ENCODE measurements at regions of chr20 and their contacts with region 1.

Region 1: DNA sequence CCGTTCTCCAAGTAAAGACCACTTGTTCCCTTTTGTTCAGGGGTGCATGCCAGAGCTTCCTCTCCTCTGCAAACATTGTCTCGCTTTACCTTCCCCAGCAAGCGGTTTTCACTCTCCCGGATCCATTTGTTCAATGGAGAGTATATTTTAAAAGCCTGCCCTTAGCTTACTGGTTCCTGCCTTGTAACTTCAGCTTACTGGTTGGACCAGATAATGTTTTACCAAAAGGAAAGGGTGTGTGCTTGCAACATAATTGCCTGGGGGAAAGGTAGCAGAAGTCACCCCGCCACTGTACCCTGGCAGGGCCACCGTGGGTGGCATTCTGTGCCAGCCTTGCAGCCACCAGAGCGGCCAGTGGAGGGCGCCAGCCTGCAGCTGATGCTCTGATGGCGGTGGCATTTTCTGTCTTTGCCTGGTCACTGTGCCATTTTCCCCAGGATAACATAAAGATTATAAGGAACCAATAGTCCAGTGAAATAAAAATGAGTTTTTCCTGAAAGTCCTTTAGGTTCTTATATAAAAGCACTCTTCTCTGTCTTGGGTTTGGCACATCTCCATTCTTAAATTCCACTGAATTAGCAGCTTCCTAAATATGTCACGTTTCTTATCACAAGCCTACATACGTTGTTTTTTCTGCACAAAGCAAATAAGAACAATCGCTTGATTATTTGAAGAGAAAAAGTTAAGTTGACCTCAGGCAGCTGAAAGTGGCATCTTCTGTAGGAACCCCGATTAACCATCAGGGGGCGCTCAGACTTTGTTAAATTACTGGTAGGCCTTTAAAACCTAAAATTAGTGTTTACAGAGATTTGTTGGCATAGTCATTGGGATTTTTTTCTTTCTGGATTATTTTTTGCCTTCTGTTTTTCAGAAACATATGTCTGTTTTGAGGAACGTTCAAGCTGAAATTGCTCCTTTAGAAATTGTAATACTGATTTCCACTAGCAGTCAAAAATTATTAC is 67.4 kb upstream of the XRN2 start:
- DNase-seq: peak; percentile 68
- ATAC-seq: peak; percentile 88 to 89
- H3K4me3 ChIP-seq: no peak overlapping the region
- H3K27ac ChIP-seq: no peak overlapping the region
- H3K4me1 ChIP-seq: peaks cover 8% of the 10 kb centered on the region
- H3K27me3 ChIP-seq: no peaks in the 10 kb centered on the region
- CTCF ChIP-seq: peak; percentile 74

Region 2: GRCh38 chr20:21505161-21505809 is 269.5 kb after region 1 on chr20:
- intact Hi-C with region 1: loop called (anchors 5 kb)
- DNase-seq: peak; percentile 85
- ATAC-seq: peak; percentile 77 to 78
- H3K4me3 ChIP-seq: peak overlapping the region; percentile 47
- H3K27ac ChIP-seq: no peak overlapping the region
- H3K4me1 ChIP-seq: peaks cover 34% of the 10 kb centered on the region
- H3K27me3 ChIP-seq: peaks cover 82% of the 10 kb centered on the region
- CTCF ChIP-seq: peak; percentile 98